MCF 10A (cell line): ENCODE measurements at regions of chr17 and their contacts with region 1.

Region 1: DNA sequence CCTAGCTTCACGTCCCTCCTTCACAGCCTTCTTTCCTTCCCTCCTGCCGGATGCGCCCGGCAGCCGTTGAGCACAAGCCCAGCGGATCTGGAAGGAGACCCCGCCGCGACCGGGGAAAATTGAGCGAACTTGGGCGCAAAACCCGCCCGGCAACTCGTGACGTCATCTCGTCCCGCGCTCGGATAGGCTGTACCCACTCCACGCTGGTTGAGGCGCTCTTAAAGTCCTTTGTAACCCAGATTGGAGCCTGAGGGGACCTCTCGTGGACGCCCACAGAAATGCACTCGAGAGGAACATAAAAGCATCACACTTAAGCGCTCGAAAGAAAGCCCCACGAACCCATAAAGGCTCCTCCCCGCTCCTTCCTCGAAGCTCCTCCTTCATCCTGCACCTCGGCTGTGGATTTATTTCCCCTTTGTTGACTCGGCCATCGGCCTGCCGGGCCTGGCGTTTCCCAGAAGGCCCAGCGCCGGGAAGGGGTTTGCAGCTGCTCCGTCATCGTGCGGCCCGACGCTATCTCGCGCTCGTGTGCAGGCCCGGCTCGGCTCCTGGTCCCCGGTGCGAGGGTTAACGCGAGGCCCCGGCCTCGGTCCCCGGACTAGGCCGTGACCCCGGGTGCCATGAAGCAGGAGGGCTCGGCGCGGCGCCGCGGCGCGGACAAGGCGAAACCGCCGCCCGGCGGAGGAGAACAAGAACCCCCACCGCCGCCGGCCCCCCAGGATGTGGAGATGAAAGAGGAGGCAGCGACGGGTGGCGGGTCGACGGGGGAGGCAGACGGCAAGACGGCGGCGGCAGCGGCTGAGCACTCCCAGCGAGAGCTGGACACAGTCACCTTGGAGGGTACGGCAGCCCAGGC is at the start of gene PSMD3:
- DNase-seq: peak; percentile 99
- H3K4me3 Mint-ChIP-seq: peak within 1 kb of the TSS; percentile 96
- H3K27ac Mint-ChIP-seq: peak within 1 kb of the TSS; percentile 98
- H3K4me1 Mint-ChIP-seq: peaks cover 26% of the 10 kb centered on the region
- H3K27me3 Mint-ChIP-seq: no peaks in the 10 kb centered on the region
- CTCF ChIP-seq: peak; percentile 50
- total RNA-seq, gene PSMD3: 74.2 and 95.3 TPM in 2 replicates

Region 2: GRCh38 chr17:39754161-39754951 is 226.2 kb before region 1 on chr17:
- CTCF ChIA-PET with region 1: interaction called, 4 read pairs
- POLR2A ChIA-PET with region 1: interaction called, 3 read pairs
- intact Hi-C with region 1: loop called (anchors 1 kb)
- DNase-seq: peak; percentile 80
- H3K4me3 Mint-ChIP-seq: peak overlapping the region; percentile 70
- H3K27ac Mint-ChIP-seq: no peak overlapping the region
- H3K4me1 Mint-ChIP-seq: no peaks in the 10 kb centered on the region
- H3K27me3 Mint-ChIP-seq: peaks cover 45% of the 10 kb centered on the region
- CTCF ChIP-seq: peak; percentile 99

Region 3: DNA sequence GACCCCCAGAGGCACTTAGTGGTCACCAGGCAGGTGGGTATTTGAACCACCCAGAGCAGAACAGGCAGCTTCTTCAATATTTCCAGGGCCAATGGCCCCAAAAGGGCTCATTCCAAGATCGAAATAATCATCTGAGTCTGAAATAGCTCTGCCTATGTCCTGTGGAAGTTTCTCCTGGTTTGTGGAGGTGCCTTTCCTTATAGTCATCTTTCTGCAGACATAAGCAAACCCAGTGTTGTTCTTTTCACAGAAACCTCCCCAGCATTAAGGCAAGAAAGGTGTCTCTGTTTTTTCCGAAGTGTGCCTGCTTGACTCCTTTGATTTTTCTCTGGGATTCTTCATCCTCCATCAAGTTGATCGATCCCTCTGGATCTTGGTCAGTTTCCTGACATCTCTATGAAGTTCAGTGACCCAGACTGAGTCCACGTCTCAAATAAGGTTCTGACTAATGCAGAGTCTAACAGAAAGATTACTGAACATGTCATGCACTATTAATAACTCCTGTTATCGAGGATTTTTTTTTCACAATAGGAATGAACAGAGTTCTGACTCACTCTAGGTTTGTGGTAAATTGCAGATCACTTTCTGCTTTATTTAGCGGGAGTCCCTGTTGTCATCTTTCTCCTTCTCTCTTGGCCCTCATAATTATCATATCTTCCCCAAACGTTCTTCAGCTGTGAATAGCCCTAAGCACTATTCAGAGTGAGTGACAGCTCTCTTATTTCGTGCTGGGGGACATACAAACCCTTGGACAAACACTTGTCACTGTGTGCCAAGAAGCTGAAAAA is 51.5 kb before region 1 on chr17:
- CTCF ChIA-PET with region 1: interaction called, 4 read pairs
- POLR2A ChIA-PET with region 1: interaction called, 3 read pairs
- intact Hi-C with region 1: loop called (anchors 1 kb)
- DNase-seq: peak; percentile 66
- H3K4me3 Mint-ChIP-seq: peak overlapping the region; percentile 10
- H3K27ac Mint-ChIP-seq: peak overlapping the region; percentile 59
- H3K4me1 Mint-ChIP-seq: peaks cover 18% of the 10 kb centered on the region
- H3K27me3 Mint-ChIP-seq: no peaks in the 10 kb centered on the region
- CTCF ChIP-seq: no peak

Region 4: DNA sequence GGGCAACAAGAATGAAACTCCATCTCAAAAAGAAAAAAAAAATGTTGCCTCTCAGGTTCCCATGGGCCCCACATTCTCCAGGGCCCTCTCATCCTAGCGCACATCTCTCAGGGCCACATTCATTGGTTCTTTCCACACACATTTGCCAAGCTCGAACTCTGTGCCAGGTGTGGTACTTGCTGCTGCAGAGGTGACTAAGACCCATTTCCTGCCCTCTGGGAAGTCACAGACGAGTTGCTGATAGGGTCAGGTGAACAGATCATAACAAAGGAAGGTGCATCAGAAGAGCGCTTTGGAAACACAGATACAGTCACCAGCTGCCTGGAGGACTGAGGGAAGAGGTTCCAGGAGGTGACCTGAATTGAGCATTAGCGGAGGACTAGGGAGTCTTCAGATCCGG is 16.8 kb before region 1 on chr17:
- CTCF ChIA-PET with region 1: interaction called, 69 read pairs
- POLR2A ChIA-PET with region 1: interaction called, 38 read pairs
- intact Hi-C with region 1: loop called (anchors 1 kb)
- DNase-seq: peak; percentile 77
- H3K4me3 Mint-ChIP-seq: no peak overlapping the region
- H3K27ac Mint-ChIP-seq: no peak overlapping the region
- H3K4me1 Mint-ChIP-seq: peaks cover 17% of the 10 kb centered on the region
- H3K27me3 Mint-ChIP-seq: peaks cover 6% of the 10 kb centered on the region
- CTCF ChIP-seq: no peak

Region 5: GRCh38 chr17:40021451-40021971 is 40.9 kb after region 1 on chr17:
- CTCF ChIA-PET with region 1: interaction called, 4 read pairs
- POLR2A ChIA-PET with region 1: interaction called, 30 read pairs
- intact Hi-C with region 1: loop called (anchors 1 kb)
- DNase-seq: peak; percentile 99
- H3K4me3 Mint-ChIP-seq: peak overlapping the region; percentile 47
- H3K27ac Mint-ChIP-seq: peak overlapping the region; percentile 96
- H3K4me1 Mint-ChIP-seq: peaks cover 74% of the 10 kb centered on the region
- H3K27me3 Mint-ChIP-seq: no peaks in the 10 kb centered on the region
- CTCF ChIP-seq: no peak

Region 6: GRCh38 chr17:40075201-40075941 is 94.8 kb after region 1 on chr17:
- CTCF ChIA-PET with region 1: no interaction called
- POLR2A ChIA-PET with region 1: no interaction called
- intact Hi-C with region 1: no loop called
- DNase-seq: peak; percentile 78
- H3K4me3 Mint-ChIP-seq: peak overlapping the region; percentile 65
- H3K27ac Mint-ChIP-seq: peak overlapping the region; percentile 36
- H3K4me1 Mint-ChIP-seq: peaks cover 62% of the 10 kb centered on the region
- H3K27me3 Mint-ChIP-seq: no peaks in the 10 kb centered on the region
- CTCF ChIP-seq: peak; percentile 89